ENCODE measurements at regions of chr15 and their contacts with region 1.

Region 1: GRCh38 chr15:51310097-51310501 is 28.3 kb downstream of the CYP19A1 start:
- DNase-seq: no peak
- H3K4me3 ChIP-seq: no peak overlapping the region
- H3K27ac ChIP-seq: no peak overlapping the region
- H3K4me1 ChIP-seq: peaks cover 13% of the 10 kb centered on the region
- H3K27me3 ChIP-seq: no peaks in the 10 kb centered on the region
- CTCF ChIP-seq: no peak

Region 2: GRCh38 chr15:51227940-51228783 is 81.9 kb before region 1 on chr15:
- CTCF ChIA-PET with region 1: no interaction called
- dilution Hi-C with region 1: no loop called
- in situ Hi-C with region 1: no loop called
- intact Hi-C with region 1: no loop called
- DNase-seq: peak; percentile 80
- H3K4me3 ChIP-seq: no peak overlapping the region
- H3K27ac ChIP-seq: peak overlapping the region; percentile 46
- H3K4me1 ChIP-seq: peaks cover 37% of the 10 kb centered on the region
- H3K27me3 ChIP-seq: no peaks in the 10 kb centered on the region
- CTCF ChIP-seq: no peak

Region 3: GRCh38 chr15:51267703-51268083 is 42.4 kb before region 1 on chr15:
- CTCF ChIA-PET with region 1: interaction called, 15 read pairs
- dilution Hi-C with region 1: no loop called
- in situ Hi-C with region 1: no loop called
- intact Hi-C with region 1: no loop called
- DNase-seq: no peak
- H3K4me3 ChIP-seq: peak overlapping the region; percentile 36 to 46 (median 45)
- H3K27ac ChIP-seq: no peak overlapping the region
- H3K4me1 ChIP-seq: peaks cover 7% of the 10 kb centered on the region
- H3K27me3 ChIP-seq: peaks cover 8% of the 10 kb centered on the region
- CTCF ChIP-seq: no peak

Region 4: GRCh38 chr15:51366960-51367648 is 57.0 kb after region 1 on chr15:
- CTCF ChIA-PET with region 1: no interaction called
- dilution Hi-C with region 1: no loop called
- in situ Hi-C with region 1: no loop called
- intact Hi-C with region 1: no loop called
- DNase-seq: peak; percentile 22
- H3K4me3 ChIP-seq: no peak overlapping the region
- H3K27ac ChIP-seq: no peak overlapping the region
- H3K4me1 ChIP-seq: no peaks in the 10 kb centered on the region
- H3K27me3 ChIP-seq: no peaks in the 10 kb centered on the region
- CTCF ChIP-seq: peak in 1 of 2 donors; percentile 2

Region 5: GRCh38 chr15:51622604-51623370 is 312.7 kb after region 1 on chr15 and contains the start of gene DMXL2:
- CTCF ChIA-PET with region 1: no interaction called
- dilution Hi-C with region 1: no loop called
- in situ Hi-C with region 1: no loop called
- intact Hi-C with region 1: no loop called
- DNase-seq: peak; percentile 78
- H3K4me3 ChIP-seq: peak within 1 kb of the TSS; percentile 70 to 97 (median 88)
- H3K27ac ChIP-seq: peak within 1 kb of the TSS; percentile 45
- H3K4me1 ChIP-seq: peaks cover 9% of the 10 kb centered on the region
- H3K27me3 ChIP-seq: no peaks in the 10 kb centered on the region
- CTCF ChIP-seq: no peak
- total RNA-seq, gene DMXL2: 18.2 to 20.7 TPM

Measured in mammary epithelial cell (primary cell).